ENCODE measurements at regions of chr6 and their contacts with region 1.

Region 1: GRCh38 chr6:127317388-127318128 is 25.9 kb downstream of the ECHDC1 start:
- DNase-seq: no peak
- ATAC-seq: no peak
- H3K4me3 ChIP-seq: no peak overlapping the region
- H3K27ac ChIP-seq: no peak overlapping the region
- H3K4me1 ChIP-seq: no peaks in the 10 kb centered on the region
- H3K27me3 ChIP-seq: no peaks in the 10 kb centered on the region
- CTCF ChIP-seq: no peak

Region 2: GRCh38 chr6:127420556-127420955 is 103.0 kb after region 1 on chr6:
- intact Hi-C with region 1: loop called in 1 of 3 experiments (anchors 10 kb)
- DNase-seq: peak in 3 of 6 donors; percentile 40 to 53 (median 53)
- ATAC-seq: peak; percentile 87 to 100 (median 98)
- H3K4me3 ChIP-seq: no peak overlapping the region
- H3K27ac ChIP-seq: no peak overlapping the region
- H3K4me1 ChIP-seq: no peaks in the 10 kb centered on the region
- H3K27me3 ChIP-seq: no peaks in the 10 kb centered on the region
- CTCF ChIP-seq: peak in 1 of 4 donors; percentile 33

Region 3: DNA sequence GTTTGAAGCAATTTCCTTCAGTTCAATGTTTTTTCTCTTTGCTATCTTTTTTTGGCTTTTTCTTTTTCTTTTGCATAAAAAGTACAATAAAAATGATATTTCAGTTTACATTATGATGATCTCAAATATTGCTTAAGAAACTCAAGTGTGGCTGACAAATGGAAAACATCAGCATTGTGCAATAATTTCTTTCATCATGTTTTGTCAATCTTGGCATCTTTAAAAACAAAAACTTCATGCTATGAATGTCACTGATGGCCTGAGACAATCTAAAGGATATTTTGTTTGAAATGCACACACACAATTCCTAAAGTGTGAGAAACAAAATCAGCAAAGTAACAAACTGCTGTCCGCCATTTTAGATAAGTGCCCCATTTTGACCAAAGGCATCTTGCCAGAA is 215.5 kb after region 1 on chr6:
- intact Hi-C with region 1: no loop called
- DNase-seq: no peak
- ATAC-seq: no peak
- H3K4me3 ChIP-seq: no peak overlapping the region
- H3K27ac ChIP-seq: no peak overlapping the region
- H3K4me1 ChIP-seq: no peaks in the 10 kb centered on the region
- H3K27me3 ChIP-seq: peaks cover 0 to 16% (median 0%) of the 10 kb centered on the region in 4 donors
- CTCF ChIP-seq: no peak